Activated CD8-positive, alpha-beta T cell treated with anti-CD3 and anti-CD28 coated beads for 36 hours (primary cell): ENCODE measurements at regions of chr15 and their contacts with region 1.

Region 1: GRCh38 chr15:90071208-90071807 is 31.0 kb downstream of the IDH2 start:
- DNase-seq: peak; percentile 93
- ATAC-seq: peak; percentile 94
- H3K4me3 Mint-ChIP-seq: no peak overlapping the region
- H3K27ac Mint-ChIP-seq: no peak overlapping the region
- H3K4me1 Mint-ChIP-seq: peaks cover 17% of the 10 kb centered on the region
- H3K27me3 Mint-ChIP-seq: no peaks in the 10 kb centered on the region
- CTCF ChIP-seq: peak; percentile 86

Region 2: DNA sequence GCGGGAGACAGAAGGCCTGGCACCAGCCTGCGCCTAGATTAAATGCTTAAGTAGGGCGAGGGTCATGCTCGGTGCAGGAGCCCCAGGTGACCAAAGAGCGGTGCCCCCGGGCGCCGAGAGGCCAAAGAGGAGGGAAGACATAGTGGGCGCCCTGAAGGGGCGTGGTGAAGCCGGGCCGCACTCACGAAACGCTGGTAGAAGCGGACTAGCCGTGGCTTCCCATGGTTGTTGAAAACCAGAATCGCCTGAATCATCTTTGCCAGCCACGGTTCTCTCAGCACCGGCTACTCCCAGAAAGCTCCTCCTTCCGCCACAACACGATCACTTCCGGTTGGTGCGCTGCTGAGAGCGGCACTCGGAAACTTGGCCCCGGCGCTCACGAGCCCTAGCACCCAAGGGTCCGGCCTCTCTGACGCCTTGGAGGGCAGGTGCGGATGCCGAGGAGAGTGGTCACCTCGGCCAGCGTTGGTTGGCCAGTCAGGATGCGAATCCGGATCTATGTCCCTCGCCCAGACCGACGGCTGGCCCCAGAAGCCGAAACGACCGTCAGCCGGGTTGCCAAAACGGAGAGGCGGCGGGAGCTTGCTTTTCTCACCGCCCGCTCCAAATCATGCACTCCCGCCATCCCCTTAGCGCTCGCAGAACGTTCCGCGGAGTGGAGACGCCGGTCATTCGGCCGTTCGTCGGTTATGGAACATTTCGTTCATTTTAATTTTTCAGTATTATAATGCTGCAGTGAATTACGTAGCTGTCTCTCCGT is 177.4 kb before region 1 on chr15 and contains the start of gene AP3S2:
- CTCF ChIA-PET with region 1: interaction called, 23 read pairs
- POLR2A ChIA-PET with region 1: interaction called, 13 read pairs
- intact Hi-C with region 1: loop called (anchors 5 kb)
- DNase-seq: peak; percentile 93
- ATAC-seq: peak; percentile 95
- H3K4me3 Mint-ChIP-seq: peak within 1 kb of the TSS; percentile 100
- H3K27ac Mint-ChIP-seq: peak within 1 kb of the TSS; percentile 99
- H3K4me1 Mint-ChIP-seq: peaks cover 28% of the 10 kb centered on the region
- H3K27me3 Mint-ChIP-seq: no peaks in the 10 kb centered on the region
- CTCF ChIP-seq: no peak
- total RNA-seq, gene AP3S2: 20.3 to 23.0 TPM

Region 3: DNA sequence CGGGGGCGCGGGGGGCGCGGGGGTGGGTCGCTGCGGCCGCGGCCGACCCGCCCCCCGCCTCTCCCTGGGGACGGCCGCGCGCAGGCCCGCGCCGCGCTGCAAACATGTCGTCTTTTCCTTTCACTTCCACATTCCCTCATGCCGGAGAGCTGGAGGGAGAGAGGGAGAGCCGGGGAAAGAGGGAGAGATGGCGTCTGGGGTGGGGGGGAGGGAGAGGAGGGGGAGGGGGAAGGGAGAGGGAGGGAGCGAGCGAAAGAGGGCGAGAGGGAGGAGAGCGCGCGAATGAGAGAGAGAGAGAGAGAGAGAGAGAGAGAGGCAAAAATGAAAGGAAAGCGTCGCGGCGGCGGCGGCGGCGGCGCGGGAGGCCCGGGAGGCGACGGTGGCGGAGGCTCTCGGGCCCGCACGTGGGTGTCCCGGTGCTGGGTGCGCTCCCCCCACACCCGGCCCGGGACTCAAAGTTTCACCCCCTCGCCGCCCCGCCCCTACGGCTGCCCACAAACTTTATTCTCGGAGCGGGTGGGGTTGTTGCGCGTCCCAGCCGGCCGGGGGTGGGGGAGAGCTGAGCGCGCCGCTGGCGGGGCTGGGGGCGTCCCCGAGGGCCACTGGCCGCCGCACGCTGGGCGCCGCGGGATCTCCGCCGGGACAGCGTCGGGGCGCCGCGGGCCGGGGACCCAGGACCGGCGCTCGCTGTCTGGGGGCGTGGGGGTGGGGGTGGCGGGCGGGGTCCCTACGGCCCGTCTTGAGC is 69.5 kb before region 1 on chr15:
- CTCF ChIA-PET with region 1: interaction called, 11 read pairs
- POLR2A ChIA-PET with region 1: interaction called, 5 read pairs
- intact Hi-C with region 1: loop called (anchors 10 kb)
- DNase-seq: peak; percentile 72
- ATAC-seq: peak; percentile 47
- H3K4me3 Mint-ChIP-seq: peak overlapping the region; percentile 78
- H3K27ac Mint-ChIP-seq: peak overlapping the region; percentile 89
- H3K4me1 Mint-ChIP-seq: peaks cover 54% of the 10 kb centered on the region
- H3K27me3 Mint-ChIP-seq: no peaks in the 10 kb centered on the region
- CTCF ChIP-seq: no peak

Region 4: GRCh38 chr15:90035095-90035827 is 36.0 kb before region 1 on chr15:
- CTCF ChIA-PET with region 1: interaction called, 11 read pairs
- POLR2A ChIA-PET with region 1: no interaction called
- intact Hi-C with region 1: no loop called
- DNase-seq: no peak
- ATAC-seq: no peak
- H3K4me3 Mint-ChIP-seq: no peak overlapping the region
- H3K27ac Mint-ChIP-seq: peak overlapping the region; percentile 91
- H3K4me1 Mint-ChIP-seq: peaks cover 84% of the 10 kb centered on the region
- H3K27me3 Mint-ChIP-seq: no peaks in the 10 kb centered on the region
- CTCF ChIP-seq: no peak

Region 5: GRCh38 chr15:90086868-90087268 is 15.6 kb after region 1 on chr15:
- CTCF ChIA-PET with region 1: interaction called, 25 read pairs
- POLR2A ChIA-PET with region 1: interaction called, 4 read pairs
- intact Hi-C with region 1: no loop called
- DNase-seq: peak; percentile 73
- ATAC-seq: peak; percentile 84
- H3K4me3 Mint-ChIP-seq: no peak overlapping the region
- H3K27ac Mint-ChIP-seq: no peak overlapping the region
- H3K4me1 Mint-ChIP-seq: peaks cover 8% of the 10 kb centered on the region
- H3K27me3 Mint-ChIP-seq: no peaks in the 10 kb centered on the region
- CTCF ChIP-seq: peak; percentile 55